ENCODE measurements at regions of chr22 and their contacts with region 1.

Region 1: GRCh38 chr22:23278883-23279675 is 98.8 kb downstream of the BCR start:
- DNase-seq: no peak
- CTCF ChIP-seq: no peak

Region 2: DNA sequence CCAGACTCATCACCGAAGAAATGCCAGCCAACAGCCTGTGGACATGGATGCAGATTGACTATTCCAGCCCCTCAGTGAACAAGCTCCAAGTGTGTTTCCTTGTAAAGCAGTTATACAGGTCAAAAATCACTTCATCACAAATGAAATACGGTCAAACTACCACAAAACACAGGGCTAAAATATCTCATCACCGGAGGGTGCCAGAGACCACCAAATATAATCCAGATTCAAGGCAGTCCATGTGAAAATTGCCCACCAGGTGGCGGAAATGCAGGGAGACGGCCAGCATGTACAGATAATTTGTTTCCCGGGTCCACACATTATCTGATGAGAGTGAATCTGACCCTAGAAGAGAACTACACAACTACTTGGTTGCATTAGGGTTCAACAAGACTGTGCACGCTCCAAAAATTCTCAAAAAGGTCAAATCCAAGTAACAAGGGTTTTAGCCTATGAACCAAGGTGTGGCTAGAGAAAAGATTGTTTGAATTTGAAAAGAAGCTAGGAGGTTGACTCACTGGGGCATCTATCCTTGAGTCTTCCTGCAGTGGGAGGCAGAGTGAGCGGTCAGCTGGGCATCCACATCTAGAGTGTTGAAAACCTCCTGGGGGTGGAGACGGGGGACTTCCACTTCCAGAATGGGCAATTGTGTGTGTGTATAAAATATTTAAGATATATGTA is 319.8 kb before region 1 on chr22:
- in situ Hi-C with region 1: loop called (anchors 10 kb)
- DNase-seq: peak; percentile 51
- CTCF ChIP-seq: peak; percentile 85

Region 3: DNA sequence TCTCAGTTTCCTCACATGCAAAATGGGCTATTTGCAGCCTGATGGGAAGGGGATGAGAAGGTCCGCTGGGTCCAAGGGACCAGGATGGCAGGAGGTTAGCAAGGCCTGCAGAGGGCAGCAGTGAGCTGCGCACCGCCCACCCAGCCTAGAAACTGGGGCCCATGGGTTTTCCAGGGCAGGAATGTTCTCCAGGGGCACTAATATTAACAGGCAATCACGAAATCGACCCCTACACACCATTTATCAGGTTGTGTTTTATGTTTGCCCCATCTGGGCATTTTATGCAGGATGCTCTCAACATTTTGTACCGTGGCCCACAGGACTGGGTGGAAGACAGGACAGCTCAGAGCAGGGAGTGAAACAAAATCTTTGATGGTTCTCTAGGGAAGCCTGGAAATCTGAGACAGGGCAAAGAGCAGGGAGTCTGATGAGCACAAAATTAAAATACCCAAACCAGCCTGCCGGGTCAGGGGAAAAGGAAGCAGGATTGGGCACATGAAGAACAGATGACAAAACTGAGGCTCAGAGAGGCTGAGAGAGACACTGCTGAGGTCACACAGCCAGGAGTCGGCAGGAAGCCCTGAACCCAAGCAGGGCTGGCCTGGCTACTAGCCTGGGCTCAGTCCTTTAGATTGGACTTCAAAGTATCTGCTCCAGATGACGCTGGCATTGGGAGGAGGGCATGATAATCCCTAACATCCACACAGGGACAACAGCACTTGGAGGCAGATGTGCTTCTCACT is 100.4 kb before region 1 on chr22:
- in situ Hi-C with region 1: loop called (anchors 5 kb)
- DNase-seq: peak; percentile 79
- CTCF ChIP-seq: peak; percentile 93

Measured in GM13976 (cell line).